GM12878 (cell line): ENCODE measurements at regions of chr12 and their contacts with region 1.

Region 1: GRCh38 chr12:88299567-88300101 is 157.5 kb downstream of the TMTC3 start:
- DNase-seq: peak; percentile 91
- ATAC-seq: peak; percentile 92
- H3K4me3 ChIP-seq: no peak overlapping the region
- H3K27ac ChIP-seq: peak overlapping the region; percentile 71; the same call in 1 of the 2 replicates
- H3K4me1 ChIP-seq: peaks cover 5% of the 10 kb centered on the region; the same call in 1 of the 2 replicates
- H3K27me3 ChIP-seq: no peaks in the 10 kb centered on the region
- CTCF ChIP-seq: no peak
- EP300 ChIP-seq: peak; percentile 88 to 89; a peak in 3 of 4 replicates
- POLR2A ChIP-seq: no peak
- RAD21 ChIP-seq: no peak; the same call in 1 of the 2 replicates

Region 2: GRCh38 chr12:88153959-88154358 is 145.7 kb before region 1 on chr12:
- CTCF ChIA-PET with region 1: interaction called, 3 read pairs
- POLR2A ChIA-PET with region 1: no interaction called
- RAD21 ChIA-PET with region 1: interaction called, 15 read pairs
- SMC1A ChIA-PET with region 1: interaction called, 6 read pairs
- in situ Hi-C with region 1: no loop called
- intact Hi-C with region 1: no loop called
- DNase-seq: no peak
- ATAC-seq: 0 out of 3 replicates have a peak, but pooled peaks have one; percentile 25
- H3K4me3 ChIP-seq: no peak overlapping the region
- H3K27ac ChIP-seq: no peak overlapping the region
- H3K4me1 ChIP-seq: no peaks in the 10 kb centered on the region
- H3K27me3 ChIP-seq: no peaks in the 10 kb centered on the region
- CTCF ChIP-seq: peak in 1 of 3 experiments; percentile 17; a peak in 1 of 6 replicates
- EP300 ChIP-seq: no peak
- POLR2A ChIP-seq: no peak
- RAD21 ChIP-seq: peak; percentile 46; the same call in 1 of the 2 replicates

Region 3: DNA sequence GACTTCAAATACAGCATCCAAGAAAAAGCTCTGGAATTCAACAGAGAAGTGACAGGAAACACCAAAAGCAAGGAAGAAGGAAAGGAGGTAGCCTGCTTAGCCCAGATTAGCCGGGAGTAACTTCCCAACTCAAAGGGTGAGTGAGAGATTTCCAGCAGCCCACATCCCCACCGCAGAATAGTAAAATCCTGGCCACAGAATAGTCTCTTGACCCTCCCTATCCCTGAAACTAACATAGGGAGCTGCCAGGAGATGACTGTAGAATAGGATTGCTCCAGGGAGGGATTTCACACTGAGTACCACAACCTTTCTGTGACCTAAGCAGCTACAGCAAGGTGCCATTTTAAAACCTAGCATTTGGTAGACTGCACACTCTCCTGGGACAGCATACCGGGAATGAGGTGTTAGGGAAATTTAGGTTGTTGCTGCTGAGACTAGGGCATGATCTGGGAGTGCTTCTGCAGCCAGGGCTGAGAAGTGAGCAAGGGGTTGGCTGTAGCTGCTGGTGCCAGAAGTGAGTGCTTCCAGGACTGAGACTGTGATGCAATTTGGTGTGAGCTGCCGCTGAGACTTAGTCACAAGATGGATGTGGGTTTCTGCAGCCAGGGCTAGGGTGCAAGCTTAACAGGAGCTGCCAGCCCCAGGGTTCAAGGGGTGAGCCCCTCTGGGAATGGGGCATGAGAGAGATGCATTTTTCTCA is 91.6 kb before region 1 on chr12:
- CTCF ChIA-PET with region 1: no interaction called
- POLR2A ChIA-PET with region 1: no interaction called
- RAD21 ChIA-PET with region 1: no interaction called
- SMC1A ChIA-PET with region 1: no interaction called
- in situ Hi-C with region 1: no loop called
- intact Hi-C with region 1: no loop called
- DNase-seq: no peak
- ATAC-seq: no peak
- H3K4me3 ChIP-seq: no peak overlapping the region
- H3K27ac ChIP-seq: no peak overlapping the region
- H3K4me1 ChIP-seq: no peaks in the 10 kb centered on the region
- H3K27me3 ChIP-seq: no peaks in the 10 kb centered on the region
- CTCF ChIP-seq: no peak
- EP300 ChIP-seq: no peak
- POLR2A ChIP-seq: no peak
- RAD21 ChIP-seq: no peak

Region 4: GRCh38 chr12:88310069-88310468 is 10.4 kb after region 1 on chr12:
- CTCF ChIA-PET with region 1: interaction called, 7 read pairs
- POLR2A ChIA-PET with region 1: interaction called, 5 read pairs
- RAD21 ChIA-PET with region 1: interaction called, 21 read pairs
- SMC1A ChIA-PET with region 1: interaction called, 14 read pairs
- in situ Hi-C with region 1: no loop called
- intact Hi-C with region 1: no loop called
- DNase-seq: no peak
- ATAC-seq: no peak
- H3K4me3 ChIP-seq: no peak overlapping the region
- H3K27ac ChIP-seq: no peak overlapping the region
- H3K4me1 ChIP-seq: no peaks in the 10 kb centered on the region
- H3K27me3 ChIP-seq: no peaks in the 10 kb centered on the region
- CTCF ChIP-seq: no peak
- EP300 ChIP-seq: no peak
- POLR2A ChIP-seq: no peak
- RAD21 ChIP-seq: no peak

Region 5: GRCh38 chr12:88383405-88383804 is 83.8 kb after region 1 on chr12:
- CTCF ChIA-PET with region 1: interaction called, 6 read pairs
- POLR2A ChIA-PET with region 1: interaction called, 19 read pairs
- RAD21 ChIA-PET with region 1: interaction called, 32 read pairs
- SMC1A ChIA-PET with region 1: interaction called, 69 read pairs
- in situ Hi-C with region 1: no loop called
- intact Hi-C with region 1: loop called (anchors 1 kb)
- DNase-seq: no peak
- ATAC-seq: peak; percentile 76
- H3K4me3 ChIP-seq: no peak overlapping the region
- H3K27ac ChIP-seq: no peak overlapping the region
- H3K4me1 ChIP-seq: no peaks in the 10 kb centered on the region
- H3K27me3 ChIP-seq: no peaks in the 10 kb centered on the region
- CTCF ChIP-seq: no peak
- EP300 ChIP-seq: no peak
- POLR2A ChIP-seq: no peak
- RAD21 ChIP-seq: no peak

Region 6: GRCh38 chr12:88433997-88434703 is 134.5 kb after region 1 on chr12:
- CTCF ChIA-PET with region 1: no interaction called
- POLR2A ChIA-PET with region 1: no interaction called
- RAD21 ChIA-PET with region 1: interaction called, 10 read pairs
- SMC1A ChIA-PET with region 1: interaction called, 7 read pairs
- in situ Hi-C with region 1: no loop called
- intact Hi-C with region 1: no loop called
- DNase-seq: peak; percentile 28
- ATAC-seq: peak; percentile 83
- H3K4me3 ChIP-seq: no peak overlapping the region
- H3K27ac ChIP-seq: no peak overlapping the region
- H3K4me1 ChIP-seq: 0 out of 2 replicates have a peak, but pooled peaks cover 5% of the 10 kb centered on the region
- H3K27me3 ChIP-seq: no peaks in the 10 kb centered on the region
- CTCF ChIP-seq: no peak
- EP300 ChIP-seq: no peak
- POLR2A ChIP-seq: no peak
- RAD21 ChIP-seq: no peak